ENCODE measurements at regions of chr10 and their contacts with region 1.

Region 1: DNA sequence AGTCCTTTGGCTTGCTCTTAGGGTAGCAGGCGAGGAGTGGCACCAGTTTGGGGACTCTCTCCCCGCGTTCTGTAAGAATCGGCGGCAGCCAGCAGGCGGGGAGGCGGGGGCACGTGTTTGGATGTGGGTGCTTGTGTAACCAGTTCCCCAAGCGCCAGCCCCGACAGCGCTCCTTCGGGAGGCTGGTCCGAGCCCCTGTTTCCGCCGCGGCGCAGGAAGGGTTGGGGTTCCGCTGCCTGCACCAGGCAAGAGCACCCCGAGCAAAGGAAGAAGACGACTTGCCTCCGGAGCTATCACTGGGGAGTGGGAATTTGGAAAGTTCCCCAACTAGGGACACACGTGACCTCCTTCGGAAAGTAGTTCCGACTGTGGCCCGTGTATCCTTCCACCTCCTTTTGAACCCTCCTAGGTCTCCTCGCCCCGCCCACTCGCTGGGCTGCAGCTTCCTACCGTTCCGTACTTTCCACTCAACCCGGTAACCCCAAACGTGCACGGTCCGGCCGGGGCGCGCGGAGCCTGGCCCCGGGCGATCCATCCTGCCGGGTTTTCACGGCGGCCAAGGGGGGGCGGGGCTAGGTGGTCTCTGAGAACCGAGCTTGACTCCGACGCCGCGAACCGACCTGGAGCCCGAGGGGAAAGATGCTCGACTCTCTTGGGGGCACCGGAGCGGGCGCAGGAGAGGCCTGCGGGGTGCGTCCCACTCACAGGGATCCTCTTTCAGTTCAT is 1.2 kb downstream of the KLLN start:
- DNase-seq: peak; percentile 88 to 95 (median 92)
- H3K4me3 ChIP-seq: peak overlapping the region; percentile 91
- H3K4me3 Mint-ChIP-seq: peak overlapping the region; percentile 94 to 100 (median 97)
- H3K27ac ChIP-seq: peak overlapping the region; percentile 74
- H3K27ac Mint-ChIP-seq: peak overlapping the region; percentile 87 to 96 (median 95)
- H3K4me1 ChIP-seq: peaks cover 13% of the 10 kb centered on the region
- H3K4me1 Mint-ChIP-seq: peaks cover 33 to 48% (median 45%) of the 10 kb centered on the region in 3 donors
- H3K27me3 ChIP-seq: no peaks in the 10 kb centered on the region
- H3K27me3 Mint-ChIP-seq: peaks cover 0 to 4% of the 10 kb centered on the region in 2 donors

Region 2: GRCh38 chr10:87734987-87735827 is 126.9 kb before region 1 on chr10:
- CTCF ChIA-PET with region 1: no interaction called
- POLR2A ChIA-PET with region 1: no interaction called
- DNase-seq: no peak
- H3K4me3 ChIP-seq: no peak overlapping the region
- H3K4me3 Mint-ChIP-seq: no peak overlapping the region
- H3K27ac ChIP-seq: no peak overlapping the region
- H3K27ac Mint-ChIP-seq: no peak overlapping the region
- H3K4me1 ChIP-seq: no peaks in the 10 kb centered on the region
- H3K4me1 Mint-ChIP-seq: no peaks in the 10 kb centered on the region
- H3K27me3 ChIP-seq: no peaks in the 10 kb centered on the region
- H3K27me3 Mint-ChIP-seq: peaks cover 21 to 33% of the 10 kb centered on the region in 2 donors

Region 3: GRCh38 chr10:87837445-87837844 is 24.7 kb before region 1 on chr10:
- CTCF ChIA-PET with region 1: no interaction called
- POLR2A ChIA-PET with region 1: no interaction called
- DNase-seq: no peak
- H3K4me3 ChIP-seq: no peak overlapping the region
- H3K4me3 Mint-ChIP-seq: no peak overlapping the region
- H3K27ac ChIP-seq: no peak overlapping the region
- H3K27ac Mint-ChIP-seq: no peak overlapping the region
- H3K4me1 ChIP-seq: no peaks in the 10 kb centered on the region
- H3K4me1 Mint-ChIP-seq: no peaks in the 10 kb centered on the region
- H3K27me3 ChIP-seq: no peaks in the 10 kb centered on the region
- H3K27me3 Mint-ChIP-seq: no peaks in the 10 kb centered on the region

Region 4: DNA sequence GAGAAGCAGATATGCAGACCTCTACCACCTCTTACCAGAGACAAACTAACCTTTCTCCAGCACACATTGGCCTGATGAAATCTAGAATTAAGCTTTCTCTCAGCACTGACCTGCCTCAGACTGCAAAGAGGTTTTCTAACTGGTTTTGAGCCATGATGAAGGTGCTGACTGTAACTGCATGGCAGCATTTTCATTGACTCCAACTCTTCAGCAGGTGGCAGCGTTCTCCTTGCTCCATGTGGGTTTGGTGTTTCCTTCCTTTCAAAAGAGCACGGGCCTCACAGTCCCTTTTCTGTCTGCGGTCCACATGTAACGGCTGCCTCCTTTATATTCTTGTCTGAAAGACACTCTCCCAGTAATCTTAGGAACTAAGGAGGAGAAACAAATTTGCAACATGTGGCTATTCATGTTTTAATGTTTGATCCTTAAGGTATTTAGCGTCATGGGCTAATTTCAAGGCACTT is 11.3 kb before region 1 on chr10:
- CTCF ChIA-PET with region 1: interaction called, 30 read pairs
- POLR2A ChIA-PET with region 1: no interaction called
- DNase-seq: peak; percentile 11 to 63 (median 43)
- H3K4me3 ChIP-seq: no peak overlapping the region
- H3K4me3 Mint-ChIP-seq: no peak overlapping the region
- H3K27ac ChIP-seq: no peak overlapping the region
- H3K27ac Mint-ChIP-seq: no peak overlapping the region
- H3K4me1 ChIP-seq: no peaks in the 10 kb centered on the region
- H3K4me1 Mint-ChIP-seq: peaks cover 5 to 12% (median 10%) of the 10 kb centered on the region in 3 donors
- H3K27me3 ChIP-seq: no peaks in the 10 kb centered on the region
- H3K27me3 Mint-ChIP-seq: peaks cover 0 to 3% of the 10 kb centered on the region in 2 donors

Region 5: GRCh38 chr10:88042160-88043100 is 180.3 kb after region 1 on chr10:
- CTCF ChIA-PET with region 1: no interaction called
- POLR2A ChIA-PET with region 1: no interaction called
- DNase-seq: no peak
- H3K4me3 ChIP-seq: no peak overlapping the region
- H3K4me3 Mint-ChIP-seq: no peak overlapping the region
- H3K27ac ChIP-seq: no peak overlapping the region
- H3K27ac Mint-ChIP-seq: no peak overlapping the region
- H3K4me1 ChIP-seq: peaks cover 6% of the 10 kb centered on the region
- H3K4me1 Mint-ChIP-seq: peaks cover 8 to 19% (median 10%) of the 10 kb centered on the region in 3 donors
- H3K27me3 ChIP-seq: no peaks in the 10 kb centered on the region
- H3K27me3 Mint-ChIP-seq: peaks cover 0 to 2% of the 10 kb centered on the region in 2 donors

Region 6: DNA sequence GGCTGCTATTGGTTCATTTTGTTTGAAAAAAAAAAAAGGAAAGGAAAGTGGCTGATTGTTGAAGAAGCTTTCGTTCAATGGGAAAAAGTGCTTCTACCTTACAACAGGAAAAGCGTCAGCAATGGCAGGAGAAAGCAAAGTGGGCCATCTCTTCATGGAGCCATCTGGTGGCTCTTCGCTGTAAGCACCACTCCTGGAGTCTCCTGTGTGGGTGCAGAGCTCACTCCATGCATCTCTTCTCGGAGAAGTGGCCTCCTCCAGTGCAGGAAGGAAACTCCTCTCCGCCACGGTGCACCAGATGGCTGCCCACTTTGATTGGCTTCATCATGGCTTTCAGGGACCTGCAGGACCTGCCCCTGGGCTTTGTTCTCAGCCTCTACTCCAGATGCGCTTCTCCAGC is 252.3 kb after region 1 on chr10:
- CTCF ChIA-PET with region 1: interaction called, 15 read pairs
- POLR2A ChIA-PET with region 1: interaction called, 5 read pairs
- DNase-seq: no peak
- H3K4me3 ChIP-seq: no peak overlapping the region
- H3K4me3 Mint-ChIP-seq: no peak overlapping the region
- H3K27ac ChIP-seq: no peak overlapping the region
- H3K27ac Mint-ChIP-seq: peak overlapping the region in 1 of 8 donors; percentile 53
- H3K4me1 ChIP-seq: peaks cover 22% of the 10 kb centered on the region
- H3K4me1 Mint-ChIP-seq: peaks cover 5 to 10% (median 7%) of the 10 kb centered on the region in 3 donors
- H3K27me3 ChIP-seq: no peaks in the 10 kb centered on the region
- H3K27me3 Mint-ChIP-seq: peaks cover 0 to 2% of the 10 kb centered on the region in 2 donors

Region 7: DNA sequence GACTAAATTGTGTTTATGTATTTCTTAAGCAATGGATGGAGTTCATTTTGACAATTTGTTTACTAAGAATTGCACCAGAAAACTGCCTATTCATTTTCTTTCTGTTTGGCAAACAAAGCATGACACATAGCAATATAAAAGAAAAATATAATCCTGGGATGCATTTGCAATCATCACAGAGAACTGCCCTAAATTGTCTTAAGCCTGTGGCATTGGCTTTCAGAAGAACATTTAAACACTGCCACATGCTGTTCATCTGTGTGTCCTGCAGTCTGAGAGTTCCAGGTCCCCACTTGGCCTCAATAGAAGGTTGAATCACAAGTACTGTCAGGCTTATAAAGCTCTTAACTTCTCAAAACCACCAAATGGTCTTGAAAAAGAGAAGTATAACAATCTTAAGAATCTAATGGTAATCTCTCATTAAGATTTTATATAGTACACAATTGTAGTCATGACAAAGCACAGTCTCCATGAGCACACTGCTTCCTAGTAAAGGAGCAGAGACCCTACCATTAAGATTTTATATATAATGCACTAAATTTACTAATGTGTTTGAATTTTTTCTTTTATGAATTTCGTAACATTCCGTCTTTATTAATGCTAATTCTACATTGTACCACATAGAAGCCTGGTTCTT is 691.1 kb after region 1 on chr10:
- CTCF ChIA-PET with region 1: interaction called, 14 read pairs
- POLR2A ChIA-PET with region 1: no interaction called
- DNase-seq: peak in 3 of 5 donors; percentile 33 to 45 (median 39)
- H3K4me3 ChIP-seq: no peak overlapping the region
- H3K4me3 Mint-ChIP-seq: no peak overlapping the region
- H3K27ac ChIP-seq: no peak overlapping the region
- H3K27ac Mint-ChIP-seq: no peak overlapping the region
- H3K4me1 ChIP-seq: no peaks in the 10 kb centered on the region
- H3K4me1 Mint-ChIP-seq: no peaks in the 10 kb centered on the region
- H3K27me3 ChIP-seq: no peaks in the 10 kb centered on the region
- H3K27me3 Mint-ChIP-seq: no peaks in the 10 kb centered on the region